CD8-positive, alpha-beta T cell (primary cell): ENCODE measurements at regions of chr16 and their contacts with region 1.

Region 1: DNA sequence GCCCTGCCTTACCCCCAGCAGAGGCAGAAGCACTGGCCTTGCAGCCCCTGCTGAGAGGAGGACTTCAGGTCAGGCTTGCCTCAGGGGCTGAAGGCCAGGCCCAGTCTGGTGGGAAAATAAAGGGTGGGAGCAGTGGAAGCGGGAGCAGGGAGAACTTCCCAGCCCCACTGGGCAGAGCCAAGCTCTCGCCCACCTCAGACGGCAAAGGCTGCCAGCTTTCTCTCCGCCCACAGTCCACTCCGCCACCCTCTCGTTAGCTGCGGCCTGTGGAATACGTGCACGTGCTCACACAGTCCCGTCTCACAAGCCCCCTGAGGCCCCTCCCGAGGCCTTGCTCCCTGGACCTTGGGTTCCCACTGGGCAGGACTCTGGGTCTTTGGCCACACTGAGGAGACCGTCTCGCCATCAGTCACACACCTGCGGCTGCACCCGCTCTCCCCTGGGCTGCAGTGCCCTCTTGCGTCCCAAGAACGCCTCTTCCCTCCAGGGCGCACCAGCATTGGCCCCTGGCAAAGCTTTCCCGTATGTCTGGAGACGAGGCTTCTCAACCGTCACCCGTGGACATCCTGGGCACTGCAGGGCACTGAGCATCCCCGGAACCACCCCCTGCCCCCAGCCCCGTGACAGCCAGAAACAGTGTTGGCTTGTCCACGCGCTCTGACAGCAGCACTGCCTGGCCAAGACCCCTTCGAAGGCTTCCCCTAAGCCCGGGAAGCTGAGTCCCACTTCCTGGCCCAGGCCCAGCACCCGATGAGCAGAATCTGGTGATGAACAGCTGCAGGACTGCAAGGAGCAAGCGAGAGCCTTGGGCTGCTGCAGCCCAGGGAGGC is 8.3 kb downstream of the MRPL28 start:
- DNase-seq: peak; percentile 51 to 86 (median 77)
- ATAC-seq: peak; percentile 96
- H3K4me3 ChIP-seq: peak overlapping the region in 1 of 2 experiments; percentile 37
- H3K4me3 Mint-ChIP-seq: peak overlapping the region; percentile 26
- H3K27ac ChIP-seq: no peak overlapping the region
- H3K27ac Mint-ChIP-seq: peak overlapping the region; percentile 45
- H3K4me1 ChIP-seq: peaks cover 9% of the 10 kb centered on the region
- H3K4me1 Mint-ChIP-seq: peaks cover 8% of the 10 kb centered on the region
- H3K27me3 ChIP-seq: no peaks in the 10 kb centered on the region
- H3K27me3 Mint-ChIP-seq: no peaks in the 10 kb centered on the region
- CTCF ChIP-seq: peak; percentile 80

Region 2: GRCh38 chr16:112153-112840 is 249.8 kb before region 1 on chr16:
- CTCF ChIA-PET with region 1: interaction called, 46 read pairs
- POLR2A ChIA-PET with region 1: interaction called, 3 read pairs
- intact Hi-C with region 1: loop called (anchors 1 kb)
- DNase-seq: no peak
- ATAC-seq: no peak
- H3K4me3 ChIP-seq: no peak overlapping the region
- H3K4me3 Mint-ChIP-seq: no peak overlapping the region
- H3K27ac ChIP-seq: no peak overlapping the region
- H3K27ac Mint-ChIP-seq: no peak overlapping the region
- H3K4me1 ChIP-seq: no peaks in the 10 kb centered on the region
- H3K4me1 Mint-ChIP-seq: no peaks in the 10 kb centered on the region
- H3K27me3 ChIP-seq: no peaks in the 10 kb centered on the region
- H3K27me3 Mint-ChIP-seq: no peaks in the 10 kb centered on the region
- CTCF ChIP-seq: no peak

Region 3: GRCh38 chr16:228818-229730 is 133.0 kb before region 1 on chr16 and contains the start of gene LUC7L:
- CTCF ChIA-PET with region 1: interaction called, 10 read pairs
- POLR2A ChIA-PET with region 1: no interaction called
- intact Hi-C with region 1: no loop called
- DNase-seq: peak; percentile 74 to 93 (median 85)
- ATAC-seq: peak; percentile 89
- H3K4me3 ChIP-seq: peak within 1 kb of the TSS; percentile 68 to 78
- H3K4me3 Mint-ChIP-seq: peak within 1 kb of the TSS; percentile 87
- H3K27ac ChIP-seq: peak within 1 kb of the TSS; percentile 84 to 92
- H3K27ac Mint-ChIP-seq: peak within 1 kb of the TSS; percentile 97
- H3K4me1 ChIP-seq: peaks cover 37% of the 10 kb centered on the region
- H3K4me1 Mint-ChIP-seq: peaks cover 36% of the 10 kb centered on the region
- H3K27me3 ChIP-seq: no peaks in the 10 kb centered on the region
- H3K27me3 Mint-ChIP-seq: no peaks in the 10 kb centered on the region
- CTCF ChIP-seq: no peak
- total RNA-seq, gene LUC7L: 136 to 142 TPM

Region 4: DNA sequence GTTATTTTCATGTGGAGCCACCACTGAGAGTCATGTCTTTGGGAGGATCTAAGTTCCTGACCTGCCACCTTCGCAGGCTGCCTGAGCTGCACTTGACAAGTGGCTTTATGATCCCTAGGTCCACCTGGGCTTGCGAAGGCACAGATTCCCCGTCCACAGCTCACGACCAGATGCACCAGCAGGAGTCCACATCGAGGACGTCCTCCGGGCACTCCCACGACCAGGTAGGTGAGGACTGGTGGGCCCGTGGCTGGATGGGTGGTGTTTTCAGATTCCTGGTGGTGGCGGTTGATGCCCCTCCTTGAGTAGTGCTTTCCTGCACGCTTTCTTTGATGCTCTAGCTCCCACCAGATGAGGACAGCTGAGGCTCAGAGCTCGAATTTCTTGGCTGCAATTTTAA is 112.7 kb before region 1 on chr16:
- CTCF ChIA-PET with region 1: no interaction called
- POLR2A ChIA-PET with region 1: no interaction called
- intact Hi-C with region 1: no loop called
- DNase-seq: no peak
- ATAC-seq: no peak
- H3K4me3 ChIP-seq: no peak overlapping the region
- H3K4me3 Mint-ChIP-seq: no peak overlapping the region
- H3K27ac ChIP-seq: no peak overlapping the region
- H3K27ac Mint-ChIP-seq: no peak overlapping the region
- H3K4me1 ChIP-seq: peaks cover 20% of the 10 kb centered on the region
- H3K4me1 Mint-ChIP-seq: peaks cover 17% of the 10 kb centered on the region
- H3K27me3 ChIP-seq: no peaks in the 10 kb centered on the region
- H3K27me3 Mint-ChIP-seq: no peaks in the 10 kb centered on the region
- CTCF ChIP-seq: no peak